PC-3 (cell line): ENCODE measurements at regions of chr7 and their contacts with region 1.

Region 1: GRCh38 chr7:14805105-14805719 is 97.3 kb downstream of the DGKB start:
- DNase-seq: no peak
- ATAC-seq: no peak
- H3K4me3 ChIP-seq: no peak overlapping the region
- H3K27ac ChIP-seq: no peak overlapping the region
- H3K4me1 ChIP-seq: no peaks in the 10 kb centered on the region
- H3K27me3 ChIP-seq: no peaks in the 10 kb centered on the region
- CTCF ChIP-seq: no peak

Region 2: GRCh38 chr7:14786314-14786895 is 18.8 kb before region 1 on chr7:
- CTCF ChIA-PET with region 1: no interaction called
- POLR2A ChIA-PET with region 1: no interaction called
- intact Hi-C with region 1: loop called (anchors 2 kb)
- DNase-seq: no peak
- ATAC-seq: no peak
- H3K4me3 ChIP-seq: no peak overlapping the region
- H3K27ac ChIP-seq: no peak overlapping the region
- H3K4me1 ChIP-seq: no peaks in the 10 kb centered on the region
- H3K27me3 ChIP-seq: no peaks in the 10 kb centered on the region
- CTCF ChIP-seq: no peak

Region 3: GRCh38 chr7:15043931-15044330 is 238.7 kb after region 1 on chr7:
- CTCF ChIA-PET with region 1: no interaction called
- POLR2A ChIA-PET with region 1: no interaction called
- intact Hi-C with region 1: no loop called
- DNase-seq: no peak
- ATAC-seq: no peak
- H3K4me3 ChIP-seq: no peak overlapping the region
- H3K27ac ChIP-seq: no peak overlapping the region
- H3K4me1 ChIP-seq: peaks cover 14% of the 10 kb centered on the region; the same call in 1 of the 2 replicates
- H3K27me3 ChIP-seq: no peaks in the 10 kb centered on the region
- CTCF ChIP-seq: no peak